ENCODE measurements at regions of chr17 and their contacts with region 1.

Region 1: DNA sequence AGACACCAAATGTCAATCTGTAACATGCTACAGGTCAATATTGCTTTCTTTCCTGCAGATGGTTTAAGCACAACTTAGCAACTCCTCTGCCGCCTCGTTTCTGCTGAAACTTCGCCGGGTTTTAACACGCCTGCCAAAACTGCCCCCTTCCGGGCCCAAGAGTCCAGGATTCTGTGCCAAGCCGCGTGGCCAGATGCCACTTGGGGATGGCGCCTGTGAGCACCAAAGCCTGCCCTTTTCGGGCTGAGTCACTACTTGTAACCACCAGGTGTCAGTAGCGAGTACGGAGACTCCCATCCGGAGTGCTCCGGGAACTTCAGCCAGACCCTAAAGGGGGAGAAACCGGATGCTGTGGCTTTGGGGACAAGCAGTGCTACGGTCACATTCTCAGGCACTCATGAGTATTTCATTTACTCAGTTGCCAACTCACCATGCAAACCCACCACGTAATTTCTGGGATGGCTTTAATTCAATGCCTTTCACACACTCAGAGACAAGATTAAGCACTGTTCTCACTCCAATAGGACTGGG is 7.8 kb downstream of the PMP22 start:
- DNase-seq: peak; percentile 33
- H3K4me3 Mint-ChIP-seq: no peak overlapping the region
- H3K27ac Mint-ChIP-seq: no peak overlapping the region
- H3K4me1 Mint-ChIP-seq: peaks cover 24% of the 10 kb centered on the region
- H3K27me3 Mint-ChIP-seq: peaks cover 57% of the 10 kb centered on the region

Region 2: DNA sequence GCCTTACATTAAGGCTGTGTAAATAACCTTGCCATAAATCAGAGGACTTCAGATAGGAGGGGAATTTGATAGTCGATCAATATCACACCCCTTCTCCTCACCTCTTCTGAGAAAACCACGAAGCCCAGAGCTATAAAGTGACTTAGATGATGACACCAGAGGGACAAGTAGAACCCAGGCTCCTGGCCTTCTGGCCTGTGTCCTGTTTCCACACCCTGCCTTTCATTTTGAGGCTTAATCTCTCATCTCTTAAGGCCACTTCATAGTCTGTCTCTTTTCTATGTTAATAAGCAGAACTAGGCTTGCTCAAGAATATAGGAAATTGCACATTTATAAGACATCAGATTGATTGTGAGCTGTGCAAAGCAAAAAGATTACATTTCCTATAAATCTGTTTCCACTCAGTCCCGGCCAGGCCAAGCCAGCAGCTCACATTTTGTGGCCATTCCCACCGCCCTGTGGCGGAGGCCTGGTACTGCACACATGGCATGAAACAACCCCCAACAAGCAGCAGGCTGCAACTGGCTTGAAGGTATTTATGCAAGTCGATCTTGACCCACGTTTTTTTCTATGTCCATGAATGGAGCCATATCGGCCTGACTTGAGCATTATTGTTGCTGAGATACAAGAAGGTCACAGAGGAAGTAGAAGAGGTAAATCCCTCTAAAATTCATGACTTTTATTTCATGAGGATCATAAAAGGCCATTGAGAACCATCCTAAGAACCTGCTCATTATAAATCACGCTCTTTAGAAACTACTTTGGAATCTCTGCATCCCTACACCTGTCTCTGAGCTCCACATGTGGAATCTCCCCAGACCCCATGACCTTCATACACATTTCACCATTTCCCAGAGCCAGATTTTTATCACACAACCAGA is 85.9 kb before region 1 on chr17:
- intact Hi-C with region 1: no loop called
- DNase-seq: no peak
- H3K4me3 Mint-ChIP-seq: no peak overlapping the region
- H3K27ac Mint-ChIP-seq: no peak overlapping the region
- H3K4me1 Mint-ChIP-seq: no peaks in the 10 kb centered on the region
- H3K27me3 Mint-ChIP-seq: no peaks in the 10 kb centered on the region

Region 3: DNA sequence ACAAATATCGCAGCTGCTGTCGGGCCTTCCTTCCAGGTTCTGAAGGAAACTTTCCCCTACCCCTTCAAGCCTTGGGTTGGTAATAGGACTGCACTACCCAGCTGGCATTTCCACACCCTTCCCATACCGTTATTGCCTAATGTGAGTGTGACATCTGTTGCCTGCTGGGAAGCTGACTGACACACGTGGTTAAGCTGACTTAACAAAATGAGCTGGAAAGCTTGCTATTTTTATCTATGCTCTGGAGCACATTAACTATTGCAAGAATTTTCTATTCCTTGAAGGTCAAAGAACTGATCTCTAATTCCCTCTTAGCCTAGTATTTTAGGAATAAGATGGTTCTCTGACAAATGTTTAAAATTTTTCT is 71.7 kb before region 1 on chr17:
- intact Hi-C with region 1: no loop called
- DNase-seq: no peak
- H3K4me3 Mint-ChIP-seq: no peak overlapping the region
- H3K27ac Mint-ChIP-seq: no peak overlapping the region
- H3K4me1 Mint-ChIP-seq: no peaks in the 10 kb centered on the region
- H3K27me3 Mint-ChIP-seq: no peaks in the 10 kb centered on the region

Region 4: GRCh38 chr17:15502369-15503112 is 245.2 kb after region 1 on chr17:
- intact Hi-C with region 1: loop called (anchors 1 kb)
- DNase-seq: peak; percentile 45
- H3K4me3 Mint-ChIP-seq: no peak overlapping the region
- H3K27ac Mint-ChIP-seq: no peak overlapping the region
- H3K4me1 Mint-ChIP-seq: peaks cover 7% of the 10 kb centered on the region
- H3K27me3 Mint-ChIP-seq: no peaks in the 10 kb centered on the region

Region 5: DNA sequence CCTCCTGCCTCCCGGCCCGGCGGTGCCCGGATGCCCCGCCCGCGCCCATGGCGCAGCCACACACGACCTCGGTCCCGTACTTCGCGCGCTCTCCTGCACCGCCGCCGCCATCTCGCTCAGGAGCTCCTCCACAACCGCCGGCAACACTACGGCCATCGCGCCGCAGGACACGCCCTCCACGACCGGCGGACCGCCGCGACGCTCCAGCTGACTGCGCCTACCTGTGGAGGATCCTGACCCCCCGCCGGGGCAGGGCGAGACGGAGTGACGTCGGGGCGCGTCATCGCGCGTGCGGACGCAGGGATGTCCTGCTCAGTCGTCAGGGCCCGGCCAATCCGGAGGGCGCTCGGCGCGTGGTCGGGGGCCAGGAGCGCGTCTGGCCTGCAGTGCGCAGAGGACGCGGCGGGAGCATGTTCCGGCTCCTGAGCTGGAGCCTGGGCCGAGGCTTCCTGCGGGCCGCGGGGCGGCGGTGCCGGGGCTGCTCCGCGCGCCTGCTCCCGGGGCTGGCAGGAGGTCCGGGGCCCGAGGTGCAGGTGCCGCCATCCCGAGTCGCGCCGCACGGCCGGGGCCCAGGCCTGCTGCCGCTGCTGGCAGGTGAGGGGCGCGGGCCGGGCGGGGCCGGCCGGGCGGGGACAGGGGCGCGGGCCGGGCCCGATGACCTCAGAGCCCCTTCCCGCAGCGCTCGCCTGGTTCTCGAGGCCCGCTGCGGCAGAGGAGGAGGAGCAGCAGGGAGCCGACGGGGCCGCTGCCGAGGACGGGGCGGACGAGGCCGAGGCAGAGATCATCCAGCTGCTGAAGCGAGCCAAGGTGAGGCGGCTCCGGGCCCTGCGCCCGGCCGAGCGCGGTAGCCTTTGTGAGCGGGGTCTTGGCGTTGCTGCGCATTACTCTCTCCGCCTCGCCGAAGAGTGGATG is 742.4 kb after region 1 on chr17 and contains the starts of genes TTC19 and ZSWIM7:
- intact Hi-C with region 1: loop called (anchors 2 kb)
- DNase-seq: peak; percentile 93
- H3K4me3 Mint-ChIP-seq: peak within 1 kb of the TSS; percentile 96
- H3K27ac Mint-ChIP-seq: peak within 1 kb of the TSS; percentile 99
- H3K4me1 Mint-ChIP-seq: peaks cover 35% of the 10 kb centered on the region
- H3K27me3 Mint-ChIP-seq: peaks cover 1% of the 10 kb centered on the region
- total RNA-seq, gene TTC19: 38.0 and 40.3 TPM in 2 replicates
- total RNA-seq, gene ZSWIM7: 8.3 and 9.5 TPM in 2 replicates